MCF 10A (cell line): ENCODE measurements at regions of chr15 and their contacts with region 1.

Region 1: GRCh38 chr15:89472785-89473256 is 23.6 kb downstream of the RHCG start:
- DNase-seq: peak; percentile 67
- H3K4me3 Mint-ChIP-seq: no peak overlapping the region
- H3K27ac Mint-ChIP-seq: no peak overlapping the region
- H3K4me1 Mint-ChIP-seq: no peaks in the 10 kb centered on the region
- H3K27me3 Mint-ChIP-seq: peaks cover 46% of the 10 kb centered on the region
- CTCF ChIP-seq: peak; percentile 88

Region 2: DNA sequence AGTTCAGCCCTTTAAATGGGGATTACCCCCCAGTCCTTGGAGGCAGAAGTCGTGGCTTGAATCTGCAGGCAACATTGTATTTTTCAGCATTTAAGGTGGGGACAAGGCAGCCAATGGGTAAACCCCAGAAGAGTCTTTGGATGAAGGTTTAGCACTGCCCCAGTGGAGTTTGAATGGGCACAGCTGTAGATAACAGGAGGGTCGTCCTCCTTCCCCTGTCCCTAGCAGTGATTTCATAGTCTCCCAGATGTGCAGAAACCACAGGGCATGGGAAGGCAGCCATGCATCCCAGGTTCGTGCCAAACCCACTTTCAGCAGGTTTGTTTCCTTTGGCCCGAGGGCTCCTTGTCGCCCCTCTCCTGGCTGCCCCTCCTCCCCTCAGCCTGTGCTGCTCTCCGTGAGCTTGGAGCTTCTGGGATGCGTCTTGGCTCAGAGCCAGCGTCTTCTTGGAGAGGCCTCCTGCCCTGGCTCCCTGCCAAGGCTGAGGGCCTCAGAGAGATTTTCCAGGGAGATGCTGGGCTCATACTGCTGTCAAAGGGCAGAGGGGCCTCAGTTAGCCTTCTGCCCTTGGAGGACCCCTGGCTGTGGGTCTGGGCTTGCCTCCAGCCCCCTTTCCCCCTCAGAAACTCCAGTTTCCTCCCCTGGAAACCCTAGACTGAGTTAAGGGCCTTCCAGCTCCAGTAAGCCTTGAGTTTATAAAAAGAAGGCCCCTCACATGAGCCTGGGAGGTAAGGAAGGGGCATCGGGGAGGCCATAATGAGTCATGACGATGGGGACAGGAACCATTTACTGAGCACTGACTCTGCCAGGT is 89.3 kb before region 1 on chr15:
- CTCF ChIA-PET with region 1: no interaction called
- POLR2A ChIA-PET with region 1: no interaction called
- intact Hi-C with region 1: no loop called
- DNase-seq: peak; percentile 96
- H3K4me3 Mint-ChIP-seq: no peak overlapping the region
- H3K27ac Mint-ChIP-seq: no peak overlapping the region
- H3K4me1 Mint-ChIP-seq: no peaks in the 10 kb centered on the region
- H3K27me3 Mint-ChIP-seq: peaks cover 45% of the 10 kb centered on the region
- CTCF ChIP-seq: no peak

Region 3: GRCh38 chr15:89416141-89416853 is 56.5 kb before region 1 on chr15:
- CTCF ChIA-PET with region 1: interaction called, 17 read pairs
- POLR2A ChIA-PET with region 1: no interaction called
- intact Hi-C with region 1: no loop called
- DNase-seq: peak; percentile 73
- H3K4me3 Mint-ChIP-seq: no peak overlapping the region
- H3K27ac Mint-ChIP-seq: no peak overlapping the region
- H3K4me1 Mint-ChIP-seq: no peaks in the 10 kb centered on the region
- H3K27me3 Mint-ChIP-seq: peaks cover 82% of the 10 kb centered on the region
- CTCF ChIP-seq: peak; percentile 92

Region 4: DNA sequence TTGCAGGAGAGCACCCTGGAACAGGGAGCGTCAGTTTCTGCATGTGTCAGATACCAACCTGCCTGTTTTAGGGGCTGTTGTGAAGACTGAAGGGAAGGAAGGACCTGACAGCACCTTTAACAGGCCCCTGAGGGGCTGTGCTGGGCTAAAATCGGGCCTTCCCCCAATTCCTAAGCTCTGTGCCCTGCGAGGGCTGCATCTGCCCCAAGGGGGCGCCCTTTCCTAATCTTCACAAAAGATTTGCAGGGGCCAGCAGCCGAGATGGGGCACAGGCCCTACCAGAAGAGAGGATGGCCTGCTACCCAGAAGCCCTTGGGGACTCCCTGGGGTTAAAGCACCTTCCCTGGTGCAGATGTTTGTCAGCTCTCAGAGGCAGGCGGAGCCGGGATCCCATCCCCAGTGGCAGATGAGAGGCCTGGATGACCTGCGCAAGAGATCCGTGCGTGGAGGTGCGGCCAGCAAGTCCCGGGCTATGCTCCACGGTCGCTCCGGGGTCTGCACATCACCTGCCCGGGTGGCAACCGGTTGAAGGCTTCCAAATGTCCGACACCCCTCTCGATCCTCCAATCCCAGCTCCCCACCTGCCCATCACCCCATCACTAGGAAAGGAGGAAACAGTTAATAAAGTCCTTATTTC is 30.0 kb before region 1 on chr15:
- CTCF ChIA-PET with region 1: interaction called, 12 read pairs
- POLR2A ChIA-PET with region 1: interaction called, 4 read pairs
- intact Hi-C with region 1: loop called (anchors 1 kb)
- DNase-seq: peak; percentile 70
- H3K4me3 Mint-ChIP-seq: no peak overlapping the region
- H3K27ac Mint-ChIP-seq: no peak overlapping the region
- H3K4me1 Mint-ChIP-seq: no peaks in the 10 kb centered on the region
- H3K27me3 Mint-ChIP-seq: peaks cover 25% of the 10 kb centered on the region
- CTCF ChIP-seq: peak; percentile 75

Region 5: DNA sequence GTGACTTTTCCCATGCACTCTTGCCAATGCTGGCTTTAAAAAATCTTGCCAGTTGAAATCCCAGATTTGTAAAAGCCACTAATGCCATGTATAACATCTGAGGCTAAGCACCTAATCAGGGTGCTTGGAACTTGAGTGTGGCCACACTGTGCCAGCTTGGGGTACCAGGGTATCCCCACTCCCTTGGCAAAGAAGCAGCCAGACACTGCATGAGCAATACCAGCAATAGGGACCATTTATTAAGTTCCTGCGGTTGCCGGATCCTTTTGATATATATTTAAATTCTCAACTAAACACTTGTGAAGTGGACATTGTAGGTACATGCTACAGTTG is 25.7 kb after region 1 on chr15:
- CTCF ChIA-PET with region 1: no interaction called
- POLR2A ChIA-PET with region 1: no interaction called
- intact Hi-C with region 1: no loop called
- DNase-seq: no peak
- H3K4me3 Mint-ChIP-seq: no peak overlapping the region
- H3K27ac Mint-ChIP-seq: peak overlapping the region; percentile 27
- H3K4me1 Mint-ChIP-seq: peaks cover 25% of the 10 kb centered on the region
- H3K27me3 Mint-ChIP-seq: no peaks in the 10 kb centered on the region
- CTCF ChIP-seq: no peak